Heart left ventricle (tissue), 16 donors: ENCODE measurements at regions of chr5 and their contacts with region 1.

Region 1: DNA sequence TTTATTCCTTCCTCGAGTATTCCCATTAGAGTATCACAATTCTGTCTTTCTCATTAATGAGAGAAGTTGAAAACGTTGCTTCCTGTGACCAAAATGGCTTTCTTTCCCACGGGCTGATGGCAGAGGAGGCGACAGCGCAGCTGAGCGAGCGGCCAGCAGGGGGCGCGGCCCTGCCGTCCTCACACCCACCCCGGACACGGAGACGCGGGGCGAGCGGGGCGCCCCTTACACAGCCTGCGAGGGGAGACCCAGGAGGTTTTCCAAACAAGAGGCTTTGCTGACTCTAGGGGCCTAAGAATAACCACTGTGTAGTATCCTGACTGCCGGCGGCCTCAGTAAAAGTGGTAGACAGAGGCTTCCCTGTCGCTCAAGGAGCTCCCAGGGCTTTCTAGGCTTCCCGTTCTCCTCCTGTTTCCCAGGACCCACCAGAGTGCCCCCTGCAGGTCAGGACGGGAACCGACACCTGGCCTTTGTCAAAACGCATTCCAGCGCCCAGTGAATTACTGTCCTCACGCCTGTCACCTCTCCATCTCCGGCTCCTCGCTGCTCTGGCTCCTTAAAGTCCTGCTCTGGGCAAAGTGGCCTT is 27.3 kb upstream of the FGF1 start:
- DNase-seq: peak; percentile 88 to 94 (median 91)
- ATAC-seq: peak; percentile 60 to 88 (median 86)
- H3K4me3 ChIP-seq: peak overlapping the region in 11 of 12 donors; percentile 31 to 63 (median 56)
- H3K27ac ChIP-seq: peak overlapping the region; percentile 63 to 96 (median 88)
- H3K4me1 ChIP-seq: peaks cover 0 to 46% (median 25%) of the 10 kb centered on the region in 12 donors
- H3K27me3 ChIP-seq: no peaks in the 10 kb centered on the region
- CTCF ChIP-seq: peak; percentile 91 to 99 (median 97)
- POLR2A ChIP-seq: peak in 1 of 2 donors; percentile 27

Region 2: GRCh38 chr5:142748568-142749249 is 35.5 kb after region 1 on chr5:
- intact Hi-C with region 1: loop called in 1 of 10 experiments (anchors 5 kb)
- DNase-seq: peak in 3 of 5 donors; percentile 32 to 39 (median 35)
- ATAC-seq: peak in 3 of 4 donors; percentile 29 to 32 (median 30)
- H3K4me3 ChIP-seq: no peak overlapping the region
- H3K27ac ChIP-seq: no peak overlapping the region
- H3K4me1 ChIP-seq: peaks cover 8 to 79% (median 43%) of the 10 kb centered on the region in 12 donors
- H3K27me3 ChIP-seq: no peaks in the 10 kb centered on the region
- CTCF ChIP-seq: peak; percentile 31 to 70 (median 56)
- POLR2A ChIP-seq: no peak

Region 3: GRCh38 chr5:142881076-142881783 is 168.0 kb after region 1 on chr5:
- intact Hi-C with region 1: loop called (anchors 1 to 5 kb)
- DNase-seq: no peak
- ATAC-seq: peak in 3 of 4 donors; percentile 2 to 46 (median 11)
- H3K4me3 ChIP-seq: no peak overlapping the region
- H3K27ac ChIP-seq: peak overlapping the region in 11 of 12 donors; percentile 24 to 70 (median 58)
- H3K4me1 ChIP-seq: peaks cover 6 to 67% (median 37%) of the 10 kb centered on the region in 12 donors
- H3K27me3 ChIP-seq: no peaks in the 10 kb centered on the region
- CTCF ChIP-seq: no peak
- POLR2A ChIP-seq: no peak

Region 4: GRCh38 chr5:142888469-142889085 is 175.4 kb after region 1 on chr5:
- intact Hi-C with region 1: loop called in 3 of 10 experiments (anchors 2 kb)
- DNase-seq: no peak
- ATAC-seq: peak; percentile 21 to 66 (median 60)
- H3K4me3 ChIP-seq: no peak overlapping the region
- H3K27ac ChIP-seq: no peak overlapping the region
- H3K4me1 ChIP-seq: peaks cover 0 to 47% (median 18%) of the 10 kb centered on the region in 12 donors
- H3K27me3 ChIP-seq: no peaks in the 10 kb centered on the region
- CTCF ChIP-seq: peak; percentile 68 to 87 (median 79)
- POLR2A ChIP-seq: no peak

Region 5: GRCh38 chr5:143023411-143024096 is 310.3 kb after region 1 on chr5:
- intact Hi-C with region 1: no loop called
- DNase-seq: peak; percentile 63 to 89 (median 80)
- ATAC-seq: peak; percentile 95 to 97 (median 96)
- H3K4me3 ChIP-seq: no peak overlapping the region
- H3K27ac ChIP-seq: peak overlapping the region; percentile 34 to 83 (median 66)
- H3K4me1 ChIP-seq: peaks cover 0 to 51% (median 24%) of the 10 kb centered on the region in 12 donors
- H3K27me3 ChIP-seq: no peaks in the 10 kb centered on the region
- CTCF ChIP-seq: peak in 3 of 12 donors; percentile 11 to 30 (median 15)
- POLR2A ChIP-seq: no peak